Dendritic cell treated with granulocyte-macrophage colony-stimulating factor and Interleukin-4, amounts not matched to agents 40 ng/mL and 50 ng/mL, for 4 days (primary cell): ENCODE measurements at regions of chr9 and their contacts with region 1.

Region 1: GRCh38 chr9:34126207-34127034 is at the start of gene DCAF12:
- H3K4me3 Mint-ChIP-seq: peak within 1 kb of the TSS; percentile 100
- H3K27ac Mint-ChIP-seq: peak within 1 kb of the TSS; percentile 97
- H3K4me1 Mint-ChIP-seq: peaks cover 54% of the 10 kb centered on the region
- H3K27me3 Mint-ChIP-seq: peaks cover 34% of the 10 kb centered on the region

Region 2: DNA sequence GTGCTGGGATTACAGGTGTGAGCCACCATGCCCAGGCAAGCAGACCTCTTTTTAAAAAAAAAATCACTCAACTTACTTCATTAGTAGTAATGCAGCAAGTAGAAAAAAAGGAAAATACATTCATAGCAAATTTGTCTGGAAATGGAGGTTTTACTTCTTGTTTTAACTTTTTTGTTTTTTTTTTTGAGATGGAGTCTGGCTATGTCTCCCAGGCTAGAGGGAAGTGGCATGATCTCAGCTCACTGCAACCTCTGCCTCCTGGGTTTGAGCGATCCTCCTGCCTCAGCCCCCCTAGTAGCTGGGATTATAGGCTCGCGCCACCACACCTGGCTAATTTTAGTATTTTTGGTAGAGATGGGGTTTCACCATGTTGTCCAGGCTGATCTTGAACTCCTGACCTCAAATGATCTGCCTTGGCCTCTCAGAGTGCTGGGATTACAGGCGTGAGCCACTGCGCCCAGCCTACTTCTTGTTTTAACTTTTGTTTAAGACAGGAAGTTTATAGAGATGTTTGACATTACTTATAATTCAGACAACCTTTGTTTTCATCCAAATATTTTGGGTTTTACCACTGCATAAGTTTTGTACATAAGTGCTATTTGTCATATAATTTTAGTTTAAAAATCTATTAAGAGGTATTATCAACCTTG is 283.0 kb before region 1 on chr9:
- intact Hi-C with region 1: no loop called
- H3K4me3 Mint-ChIP-seq: peak overlapping the region; percentile 73
- H3K27ac Mint-ChIP-seq: peak overlapping the region; percentile 96
- H3K4me1 Mint-ChIP-seq: peaks cover 68% of the 10 kb centered on the region
- H3K27me3 Mint-ChIP-seq: no peaks in the 10 kb centered on the region

Region 3: DNA sequence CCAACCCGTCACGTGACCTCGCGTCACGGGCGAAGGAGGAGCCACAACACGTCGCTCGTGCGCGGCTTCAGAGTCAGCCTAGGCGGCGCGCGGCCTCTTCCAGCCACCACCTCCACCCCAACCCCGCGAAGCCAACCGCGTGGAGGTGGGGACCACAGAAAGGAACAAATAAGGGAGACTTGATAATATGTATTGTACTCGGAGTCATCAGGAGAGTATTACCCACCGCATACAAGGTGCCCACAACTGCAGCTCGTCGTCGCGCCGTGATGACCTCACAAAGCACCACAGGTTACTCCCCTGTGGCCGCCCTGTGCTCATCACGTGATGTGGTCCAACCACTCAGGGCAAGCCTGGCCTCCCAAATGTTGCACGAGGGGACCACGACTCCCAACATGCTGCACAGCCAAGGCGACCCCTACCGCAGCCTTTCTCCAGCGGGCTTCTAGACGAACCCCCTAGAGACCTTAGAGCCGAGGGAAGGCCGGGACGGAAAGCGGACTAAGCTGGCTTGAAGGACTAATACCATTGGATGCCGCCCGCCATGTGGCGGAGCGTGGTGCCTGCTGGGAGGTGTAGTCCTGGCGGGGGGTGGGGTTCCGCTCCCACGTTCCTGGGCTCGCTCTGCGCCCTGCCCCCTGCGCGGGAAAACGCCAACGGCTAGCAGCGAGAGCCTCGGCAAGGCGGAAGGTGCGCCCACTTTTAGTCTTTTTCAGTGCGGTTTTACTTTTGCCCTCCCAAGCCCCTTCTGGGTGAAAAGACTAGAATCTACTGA is 77.3 kb before region 1 on chr9:
- intact Hi-C with region 1: loop called (anchors 2 kb)
- H3K4me3 Mint-ChIP-seq: peak overlapping the region; percentile 89
- H3K27ac Mint-ChIP-seq: peak overlapping the region; percentile 100
- H3K4me1 Mint-ChIP-seq: peaks cover 38% of the 10 kb centered on the region
- H3K27me3 Mint-ChIP-seq: no peaks in the 10 kb centered on the region

Region 4: GRCh38 chr9:34178520-34179212 is 52.2 kb after region 1 on chr9 and contains the start of gene UBAP1:
- intact Hi-C with region 1: loop called (anchors 2 kb)
- H3K4me3 Mint-ChIP-seq: peak within 1 kb of the TSS; percentile 88
- H3K27ac Mint-ChIP-seq: peak within 1 kb of the TSS; percentile 96
- H3K4me1 Mint-ChIP-seq: peaks cover 22% of the 10 kb centered on the region
- H3K27me3 Mint-ChIP-seq: peaks cover 4% of the 10 kb centered on the region

Region 5: DNA sequence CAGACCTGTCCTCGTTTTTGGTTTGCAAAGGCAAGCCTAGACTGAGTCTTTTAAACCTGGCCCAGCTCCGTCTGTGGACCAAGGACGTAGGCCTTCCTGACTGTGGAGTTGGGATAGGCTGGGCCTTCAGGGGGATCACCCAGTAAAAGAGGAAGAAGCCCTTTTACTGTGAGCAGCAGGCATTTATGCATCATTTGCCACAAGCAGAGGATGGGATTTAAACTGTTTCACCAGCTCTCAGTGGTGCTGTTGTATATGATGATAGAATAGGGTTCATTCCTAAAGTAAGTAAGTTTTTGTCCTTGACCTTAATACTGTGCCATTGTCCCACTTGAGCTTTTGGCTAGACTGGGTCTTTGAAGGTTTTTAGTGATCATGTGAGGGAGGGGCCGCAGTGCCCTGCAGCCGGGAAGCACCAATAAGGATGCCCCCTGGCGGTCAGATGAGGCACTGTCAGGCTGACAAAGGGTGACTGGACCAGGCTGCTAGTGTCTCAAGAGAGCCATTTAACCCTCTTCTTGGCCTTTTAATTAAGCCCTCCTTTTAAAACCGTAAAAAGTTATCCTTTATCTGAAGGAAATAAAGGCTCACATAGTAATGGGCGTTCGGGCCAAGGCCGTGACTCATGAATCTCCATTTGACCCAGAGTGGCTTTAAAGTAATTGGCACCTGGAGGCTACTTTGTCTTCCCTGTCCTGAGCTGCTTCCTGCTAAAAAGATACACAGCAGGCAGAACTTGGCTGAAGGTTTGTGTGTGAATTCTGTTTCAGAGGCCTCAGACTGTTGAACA is 126.4 kb after region 1 on chr9:
- intact Hi-C with region 1: loop called (anchors 5 kb)
- H3K4me3 Mint-ChIP-seq: no peak overlapping the region
- H3K27ac Mint-ChIP-seq: no peak overlapping the region
- H3K4me1 Mint-ChIP-seq: no peaks in the 10 kb centered on the region
- H3K27me3 Mint-ChIP-seq: no peaks in the 10 kb centered on the region

Region 6: GRCh38 chr9:34328987-34329832 is 202.8 kb after region 1 on chr9 and contains the starts of genes KIF24 and NUDT2:
- intact Hi-C with region 1: loop called (anchors 5 kb)
- H3K4me3 Mint-ChIP-seq: peak within 1 kb of the TSS; percentile 90
- H3K27ac Mint-ChIP-seq: peak within 1 kb of the TSS; percentile 95
- H3K4me1 Mint-ChIP-seq: peaks cover 43% of the 10 kb centered on the region
- H3K27me3 Mint-ChIP-seq: no peaks in the 10 kb centered on the region